ENCODE measurements at regions of chr18 and their contacts with region 1.

Region 1: GRCh38 chr18:26383454-26384270 is 157.4 kb downstream of the TAF4B start:
- DNase-seq: peak; percentile 55

Region 2: GRCh38 chr18:26370037-26370436 is 13.6 kb before region 1 on chr18:
- CTCF ChIA-PET with region 1: interaction called, 19 read pairs
- POLR2A ChIA-PET with region 1: no interaction called
- DNase-seq: no peak

Region 3: GRCh38 chr18:26406854-26407517 is 23.3 kb after region 1 on chr18:
- CTCF ChIA-PET with region 1: interaction called, 11 read pairs
- POLR2A ChIA-PET with region 1: no interaction called
- DNase-seq: no peak

Measured in HEK293T (cell line).